ENCODE measurements at regions of chr5 and their contacts with region 1.

Region 1: GRCh38 chr5:77400645-77401044 is 91.5 kb downstream of the WDR41 start:
- DNase-seq: no peak
- H3K4me3 ChIP-seq: no peak overlapping the region
- H3K27ac ChIP-seq: no peak overlapping the region
- H3K4me1 ChIP-seq: no peaks in the 10 kb centered on the region
- H3K27me3 ChIP-seq: no peaks in the 10 kb centered on the region
- CTCF ChIP-seq: no peak
- POLR2A ChIP-seq: no peak

Region 2: DNA sequence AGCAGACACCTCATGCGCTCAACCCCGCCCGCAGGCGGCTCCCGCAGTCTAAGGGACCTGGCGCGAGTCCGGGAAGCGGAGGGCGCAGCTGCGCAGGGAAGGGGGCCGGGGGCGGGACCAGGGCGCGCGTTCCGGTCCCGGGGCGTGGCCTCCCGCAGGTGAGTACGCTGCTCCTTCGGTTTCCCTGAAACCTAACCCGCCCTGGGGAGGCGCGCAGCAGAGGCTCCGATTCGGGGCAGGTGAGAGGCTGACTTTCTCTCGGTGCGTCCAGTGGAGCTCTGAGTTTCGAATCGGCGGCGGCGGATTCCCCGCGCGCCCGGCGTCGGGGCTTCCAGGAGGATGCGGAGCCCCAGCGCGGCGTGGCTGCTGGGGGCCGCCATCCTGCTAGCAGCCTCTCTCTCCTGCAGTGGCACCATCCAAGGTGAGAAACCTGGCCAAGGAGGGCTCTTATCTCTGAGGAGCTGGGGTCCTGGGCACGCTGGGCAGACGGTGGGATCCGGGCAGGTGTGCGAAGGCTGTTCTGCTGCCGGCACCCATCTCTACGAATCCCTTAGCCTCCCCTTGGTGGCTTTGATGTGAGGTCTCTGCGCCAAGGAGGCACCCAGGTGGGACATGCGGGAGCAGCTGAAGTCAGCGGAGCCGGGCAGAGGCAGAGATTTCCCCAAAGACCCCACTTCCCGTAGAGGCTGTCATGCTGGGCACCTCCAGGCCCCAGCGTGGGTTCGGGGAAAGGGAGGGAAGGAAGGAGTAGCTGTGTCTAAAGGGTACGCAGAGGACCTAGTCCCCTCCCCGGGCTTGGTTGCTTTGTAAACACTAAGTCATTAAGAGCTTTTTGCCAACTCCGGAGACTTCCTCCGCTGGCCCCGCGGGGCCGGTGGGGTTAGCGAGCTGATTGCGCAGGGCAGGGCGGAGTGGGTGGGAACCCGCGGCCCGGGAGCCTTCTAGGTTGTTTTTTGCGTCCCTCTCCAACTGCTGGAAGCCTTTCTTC is 581.5 kb before region 1 on chr5 and contains the start of gene F2RL1:
- intact Hi-C with region 1: no loop called
- DNase-seq: peak; percentile 69 to 78
- H3K4me3 ChIP-seq: peak within 1 kb of the TSS; percentile 51 to 74 (median 59)
- H3K27ac ChIP-seq: peak within 1 kb of the TSS; percentile 38 to 55
- H3K4me1 ChIP-seq: no peaks in the 10 kb centered on the region
- H3K27me3 ChIP-seq: no peaks in the 10 kb centered on the region
- CTCF ChIP-seq: no peak
- POLR2A ChIP-seq: no peak
- total RNA-seq, gene F2RL1: 0.64 to 13.8 (median 5.6) TPM

Region 3: GRCh38 chr5:77104813-77105212 is 295.8 kb before region 1 on chr5:
- intact Hi-C with region 1: loop called (anchors 5 kb)
- DNase-seq: no peak
- H3K4me3 ChIP-seq: no peak overlapping the region
- H3K27ac ChIP-seq: no peak overlapping the region
- H3K4me1 ChIP-seq: no peaks in the 10 kb centered on the region
- H3K27me3 ChIP-seq: no peaks in the 10 kb centered on the region
- CTCF ChIP-seq: no peak
- POLR2A ChIP-seq: no peak

Region 4: DNA sequence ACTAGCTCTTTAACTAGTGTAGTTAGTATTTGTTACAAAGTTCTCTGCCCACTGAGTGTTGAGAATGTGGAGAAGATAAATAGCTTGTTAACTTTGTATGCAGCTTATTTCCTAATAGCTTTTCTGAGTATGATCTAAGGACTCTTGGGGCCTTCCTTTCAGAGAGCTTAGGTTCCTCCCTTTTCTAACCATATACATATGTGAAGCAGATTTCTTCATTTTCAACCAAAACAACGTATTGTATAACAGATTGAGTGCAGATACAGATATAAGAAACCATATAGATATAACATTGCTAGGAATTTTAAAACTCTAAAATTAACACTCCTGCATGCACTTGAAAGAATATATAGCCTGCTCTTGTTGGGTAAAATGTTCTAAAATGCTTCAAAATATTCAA is 1030.2 kb after region 1 on chr5:
- intact Hi-C with region 1: no loop called
- DNase-seq: no peak
- H3K4me3 ChIP-seq: no peak overlapping the region
- H3K27ac ChIP-seq: no peak overlapping the region
- H3K4me1 ChIP-seq: no peaks in the 10 kb centered on the region
- H3K27me3 ChIP-seq: no peaks in the 10 kb centered on the region
- CTCF ChIP-seq: no peak
- POLR2A ChIP-seq: no peak

Region 5: DNA sequence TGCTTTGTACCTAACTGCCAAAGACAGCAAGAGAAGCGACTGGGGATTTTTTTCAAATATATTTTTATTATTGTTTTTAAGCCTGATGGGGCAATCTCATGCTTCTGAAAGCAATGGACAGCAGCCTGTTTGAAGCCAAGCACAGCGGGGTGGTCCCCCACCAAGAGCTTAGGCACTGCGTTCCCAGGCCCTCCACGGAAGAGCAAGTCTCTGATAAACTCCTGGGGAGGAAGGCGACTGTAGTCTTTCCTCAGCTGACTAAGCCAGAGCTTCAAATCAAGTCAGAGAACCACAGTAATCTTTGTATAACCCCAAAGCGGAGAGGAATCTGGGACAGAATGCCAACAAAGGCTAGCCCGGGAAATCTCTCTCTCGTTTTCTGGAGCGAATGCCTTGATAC is 1530.1 kb after region 1 on chr5:
- intact Hi-C with region 1: no loop called
- DNase-seq: no peak
- H3K4me3 ChIP-seq: no peak overlapping the region
- H3K27ac ChIP-seq: no peak overlapping the region
- H3K4me1 ChIP-seq: no peaks in the 10 kb centered on the region
- H3K27me3 ChIP-seq: no peaks in the 10 kb centered on the region
- CTCF ChIP-seq: no peak
- POLR2A ChIP-seq: no peak

Measured in breast epithelium (tissue), 4 donors.